ENCODE measurements at regions of chr20 and their contacts with region 1.

Region 1: DNA sequence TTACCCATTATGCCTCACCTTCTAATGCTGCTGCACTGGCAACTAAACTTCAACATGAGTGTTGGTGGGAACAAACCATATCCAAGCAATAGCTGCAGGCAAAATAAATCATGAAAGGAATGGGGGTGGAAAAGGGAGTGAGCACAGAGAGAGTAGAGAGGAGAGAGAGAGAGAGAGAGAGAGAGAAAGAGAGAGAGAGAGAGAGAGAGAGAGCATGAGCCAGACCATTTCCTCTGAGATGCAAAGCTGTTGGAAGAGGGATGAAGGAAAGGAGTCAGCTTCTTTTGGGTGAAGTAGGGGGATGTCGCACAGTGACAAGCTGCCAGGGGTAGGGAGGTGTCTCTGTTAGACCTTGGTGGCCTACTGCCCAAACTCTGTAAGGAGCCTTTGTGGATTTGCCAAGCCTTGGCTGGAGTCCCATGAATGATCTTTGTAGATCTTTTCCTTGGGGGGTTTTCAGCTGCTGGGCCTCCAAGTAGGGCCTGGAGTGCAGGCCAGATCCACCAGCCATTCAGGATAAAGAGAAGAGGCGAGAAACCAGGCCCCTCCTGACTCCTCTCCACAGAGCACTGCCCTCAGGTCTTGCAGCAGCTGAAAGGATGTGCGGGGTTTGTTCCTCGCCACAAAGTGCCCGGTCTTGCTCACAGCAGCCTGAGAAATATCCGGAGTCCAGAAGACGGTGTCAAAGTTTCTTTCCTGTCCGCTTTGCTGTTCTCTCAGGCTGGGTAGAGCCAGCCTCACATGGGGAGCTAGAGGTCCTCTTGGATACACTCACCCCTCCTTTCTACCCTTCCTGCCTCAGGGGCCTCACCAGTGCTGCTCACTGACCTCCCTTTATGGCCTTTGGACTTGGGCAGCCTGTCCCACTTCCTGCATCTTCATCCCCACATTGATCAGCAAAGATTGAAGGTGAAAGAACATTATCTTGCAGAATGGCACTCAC is 17.8 kb downstream of the BTBD3 start:
- DNase-seq: no peak
- H3K4me3 ChIP-seq: no peak overlapping the region
- H3K4me1 ChIP-seq: no peaks in the 10 kb centered on the region
- H3K27me3 ChIP-seq: no peaks in the 10 kb centered on the region

Region 2: GRCh38 chr20:11140359-11140758 is 795.1 kb before region 1 on chr20:
- in situ Hi-C with region 1: no loop called
- DNase-seq: no peak
- H3K4me3 ChIP-seq: no peak overlapping the region
- H3K4me1 ChIP-seq: peaks cover 6% of the 10 kb centered on the region; the same call in 1 of the 2 replicates
- H3K27me3 ChIP-seq: peaks cover 9% of the 10 kb centered on the region

Region 3: GRCh38 chr20:11459090-11459890 is 476.2 kb before region 1 on chr20:
- in situ Hi-C with region 1: no loop called
- DNase-seq: no peak
- H3K4me3 ChIP-seq: no peak overlapping the region
- H3K4me1 ChIP-seq: peaks cover 41% of the 10 kb centered on the region
- H3K27me3 ChIP-seq: no peaks in the 10 kb centered on the region

Region 4: GRCh38 chr20:11849976-11850670 is 85.4 kb before region 1 on chr20:
- in situ Hi-C with region 1: loop called (anchors 25 kb)
- DNase-seq: peak; percentile 45 to 63
- H3K4me3 ChIP-seq: no peak overlapping the region
- H3K4me1 ChIP-seq: peaks cover 20% of the 10 kb centered on the region
- H3K27me3 ChIP-seq: no peaks in the 10 kb centered on the region

Region 5: GRCh38 chr20:12687476-12687875 is 752.0 kb after region 1 on chr20:
- in situ Hi-C with region 1: no loop called
- DNase-seq: no peak
- H3K4me3 ChIP-seq: no peak overlapping the region
- H3K4me1 ChIP-seq: no peaks in the 10 kb centered on the region
- H3K27me3 ChIP-seq: no peaks in the 10 kb centered on the region

Measured in HAP-1 (cell line).